IMR-90 (cell line): ENCODE measurements at regions of chr5 and their contacts with region 1.

Region 1: GRCh38 chr5:120258123-120258522 is 206.0 kb upstream of the PRR16 start:
- DNase-seq: no peak
- ATAC-seq: no peak
- H3K4me3 ChIP-seq: no peak overlapping the region
- H3K27ac ChIP-seq: no peak overlapping the region
- H3K4me1 ChIP-seq: no peaks in the 10 kb centered on the region
- H3K27me3 ChIP-seq: no peaks in the 10 kb centered on the region
- CTCF ChIP-seq: no peak
- POLR2A ChIP-seq: no peak
- RAD21 ChIP-seq: no peak

Region 2: DNA sequence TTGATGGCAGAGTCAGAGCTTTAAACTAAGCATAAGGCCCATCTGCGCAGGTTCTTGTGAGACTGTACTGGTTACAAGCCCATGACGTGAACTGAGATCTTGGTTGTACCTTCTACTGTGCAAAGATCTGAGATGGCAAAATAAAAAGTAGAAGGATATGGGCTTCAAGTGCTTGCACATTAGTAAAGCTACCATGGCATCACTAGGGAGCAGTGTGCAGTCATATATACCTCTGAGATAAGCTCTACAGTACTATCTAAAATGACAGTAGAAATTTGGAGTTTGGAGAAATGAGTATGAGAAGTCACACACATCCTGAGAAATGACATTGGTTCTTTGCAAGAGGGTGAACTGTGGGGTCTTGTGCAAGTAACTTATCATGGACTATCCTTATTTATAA is 202.3 kb before region 1 on chr5:
- CTCF ChIA-PET with region 1: no interaction called
- POLR2A ChIA-PET with region 1: no interaction called
- dilution Hi-C with region 1: no loop called
- in situ Hi-C with region 1: no loop called
- intact Hi-C with region 1: no loop called
- DNase-seq: peak; percentile 76
- ATAC-seq: peak; percentile 97
- H3K4me3 ChIP-seq: no peak overlapping the region
- H3K27ac ChIP-seq: no peak overlapping the region
- H3K4me1 ChIP-seq: no peaks in the 10 kb centered on the region
- H3K27me3 ChIP-seq: no peaks in the 10 kb centered on the region
- CTCF ChIP-seq: peak; percentile 71
- POLR2A ChIP-seq: no peak
- RAD21 ChIP-seq: peak; percentile 72

Region 3: DNA sequence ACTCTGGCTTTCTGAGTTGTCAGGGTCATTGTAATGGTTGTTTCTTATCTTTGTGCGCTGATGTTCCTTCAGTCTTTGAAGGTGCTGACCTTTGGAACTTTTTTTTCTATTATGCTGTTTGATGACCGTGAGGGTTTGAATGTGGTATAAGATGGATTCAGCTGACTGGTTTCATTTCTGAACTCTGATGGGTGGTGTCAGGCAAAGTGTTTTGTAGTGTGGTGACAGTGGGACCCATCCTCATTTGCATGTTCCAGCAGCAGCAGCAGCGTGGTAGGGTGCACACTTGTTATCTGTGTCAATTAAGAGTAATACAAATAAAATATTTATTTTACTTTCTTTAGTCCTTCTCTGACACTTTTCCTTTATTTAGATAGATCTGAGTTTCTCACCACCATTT is 21.8 kb before region 1 on chr5:
- CTCF ChIA-PET with region 1: no interaction called
- POLR2A ChIA-PET with region 1: no interaction called
- dilution Hi-C with region 1: no loop called
- in situ Hi-C with region 1: no loop called
- intact Hi-C with region 1: loop called (anchors 1 kb)
- DNase-seq: no peak
- ATAC-seq: no peak
- H3K4me3 ChIP-seq: no peak overlapping the region
- H3K27ac ChIP-seq: no peak overlapping the region
- H3K4me1 ChIP-seq: no peaks in the 10 kb centered on the region
- H3K27me3 ChIP-seq: no peaks in the 10 kb centered on the region
- CTCF ChIP-seq: no peak
- POLR2A ChIP-seq: no peak
- RAD21 ChIP-seq: no peak

Region 4: DNA sequence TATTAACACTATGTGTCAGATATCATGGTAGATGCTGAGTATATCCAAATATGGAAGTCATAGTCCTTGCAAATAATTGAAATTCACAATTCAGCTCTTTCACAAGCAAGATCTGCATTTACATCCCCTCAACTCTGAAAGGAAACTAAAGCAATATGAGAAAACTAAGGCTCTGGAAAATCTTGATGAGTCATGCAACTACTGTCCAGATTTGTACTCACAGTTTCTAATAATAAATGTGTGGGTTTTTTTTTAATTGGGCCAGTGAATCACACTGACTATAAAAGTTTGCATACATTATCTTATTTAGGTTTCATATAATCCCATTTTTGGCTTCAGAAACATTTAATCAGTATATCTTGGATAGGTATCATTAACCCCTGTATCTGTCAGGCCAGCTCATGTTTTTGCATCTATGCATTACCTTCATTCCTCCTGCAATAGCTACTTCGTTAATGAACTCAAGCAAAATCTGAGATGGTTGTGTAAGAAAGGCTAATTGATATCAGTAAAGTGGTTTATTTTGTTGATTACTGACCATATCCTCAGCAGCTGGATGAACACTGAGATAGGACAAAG is 147.3 kb after region 1 on chr5:
- CTCF ChIA-PET with region 1: no interaction called
- POLR2A ChIA-PET with region 1: no interaction called
- dilution Hi-C with region 1: no loop called
- in situ Hi-C with region 1: no loop called
- intact Hi-C with region 1: no loop called
- DNase-seq: peak; percentile 86
- ATAC-seq: peak; percentile 83
- H3K4me3 ChIP-seq: no peak overlapping the region
- H3K27ac ChIP-seq: peak overlapping the region; percentile 12; the same call in 1 of the 2 replicates
- H3K4me1 ChIP-seq: peaks cover 3% of the 10 kb centered on the region; the same call in 1 of the 2 replicates
- H3K27me3 ChIP-seq: no peaks in the 10 kb centered on the region
- CTCF ChIP-seq: no peak
- POLR2A ChIP-seq: no peak
- RAD21 ChIP-seq: no peak

Region 5: DNA sequence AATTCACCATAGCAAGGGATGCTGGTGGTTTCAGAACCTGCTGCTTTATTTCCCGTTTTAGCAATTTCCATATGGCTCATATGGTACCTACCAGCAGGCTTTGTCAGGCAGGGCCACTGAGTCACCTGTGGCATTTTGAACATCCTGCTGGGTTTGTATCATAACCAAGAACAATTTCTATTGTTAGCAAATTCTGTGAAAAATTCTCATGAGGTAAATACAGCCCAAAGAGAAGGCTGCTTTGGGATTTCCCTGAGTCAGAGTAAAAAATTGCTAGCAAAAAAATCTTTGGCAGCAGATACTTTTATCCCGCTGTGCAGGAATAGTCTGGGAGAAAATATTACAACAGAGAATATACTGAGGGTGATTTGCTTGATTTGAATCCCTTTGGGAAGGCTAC is 258.7 kb after region 1 on chr5:
- CTCF ChIA-PET with region 1: no interaction called
- POLR2A ChIA-PET with region 1: no interaction called
- dilution Hi-C with region 1: no loop called
- in situ Hi-C with region 1: no loop called
- intact Hi-C with region 1: no loop called
- DNase-seq: peak; percentile 63
- ATAC-seq: peak; percentile 60; the same call in 1 of the 2 replicates
- H3K4me3 ChIP-seq: no peak overlapping the region
- H3K27ac ChIP-seq: peak overlapping the region; percentile 1; the same call in 1 of the 2 replicates
- H3K4me1 ChIP-seq: peaks cover 5% of the 10 kb centered on the region
- H3K27me3 ChIP-seq: no peaks in the 10 kb centered on the region
- CTCF ChIP-seq: no peak
- POLR2A ChIP-seq: no peak
- RAD21 ChIP-seq: no peak